PC-9 (cell line): ENCODE measurements at regions of chr3 and their contacts with region 1.

Region 1: GRCh38 chr3:115814778-115815380 is 191.6 kb downstream of the GAP43 start:
- DNase-seq: peak in 1 of 2 experiments; percentile 76
- H3K4me3 ChIP-seq: no peak overlapping the region
- H3K27ac ChIP-seq: no peak overlapping the region
- H3K4me1 ChIP-seq: no peaks in the 10 kb centered on the region
- H3K27me3 ChIP-seq: no peaks in the 10 kb centered on the region
- CTCF ChIP-seq: peak; percentile 99

Region 2: GRCh38 chr3:114152519-114153151 is 1662.2 kb before region 1 on chr3:
- CTCF ChIA-PET with region 1: no interaction called
- POLR2A ChIA-PET with region 1: no interaction called
- intact Hi-C with region 1: loop called (anchors 1 kb)
- DNase-seq: peak; percentile 60 to 85
- H3K4me3 ChIP-seq: peak overlapping the region; percentile 61
- H3K27ac ChIP-seq: no peak overlapping the region
- H3K4me1 ChIP-seq: peaks cover 9% of the 10 kb centered on the region; the same call in 1 of the 2 replicates
- H3K27me3 ChIP-seq: no peaks in the 10 kb centered on the region
- CTCF ChIP-seq: peak; percentile 91

Region 3: GRCh38 chr3:114383875-114384557 is 1430.9 kb before region 1 on chr3:
- CTCF ChIA-PET with region 1: interaction called, 3 read pairs
- POLR2A ChIA-PET with region 1: no interaction called
- intact Hi-C with region 1: loop called (anchors 2 kb)
- DNase-seq: peak; percentile 38 to 65
- H3K4me3 ChIP-seq: no peak overlapping the region
- H3K27ac ChIP-seq: no peak overlapping the region
- H3K4me1 ChIP-seq: no peaks in the 10 kb centered on the region; the same call in 1 of the 2 replicates
- H3K27me3 ChIP-seq: no peaks in the 10 kb centered on the region
- CTCF ChIP-seq: peak; percentile 93

Region 4: DNA sequence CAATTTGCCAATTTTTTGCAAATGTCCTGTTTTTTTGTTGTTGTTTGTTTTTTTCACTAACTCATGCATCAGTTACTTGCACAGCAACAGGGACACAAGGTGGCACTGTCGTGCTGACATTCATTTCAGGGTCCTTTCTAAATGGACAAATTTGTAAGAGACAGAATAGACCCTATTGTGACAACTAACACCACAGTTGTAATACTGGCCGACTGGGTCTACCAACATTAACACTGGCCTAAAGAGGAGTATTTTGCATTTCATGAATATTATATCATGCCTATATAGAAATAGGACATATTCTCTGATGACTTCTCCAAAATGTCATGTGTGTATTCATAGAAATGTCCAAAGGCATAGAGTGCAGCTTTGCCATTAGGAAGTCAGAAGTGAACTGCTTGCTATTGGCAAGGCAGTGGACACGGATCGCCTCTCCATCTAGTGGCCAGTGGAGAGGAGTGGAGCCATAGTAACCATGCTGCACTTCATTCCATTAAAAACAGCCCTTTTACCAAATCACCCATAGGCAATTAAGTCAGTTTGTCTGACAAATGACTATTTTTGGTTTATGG is 722.6 kb before region 1 on chr3:
- CTCF ChIA-PET with region 1: no interaction called
- POLR2A ChIA-PET with region 1: no interaction called
- intact Hi-C with region 1: loop called (anchors 1 kb)
- DNase-seq: peak in 1 of 2 experiments; percentile 40
- H3K4me3 ChIP-seq: no peak overlapping the region
- H3K27ac ChIP-seq: no peak overlapping the region
- H3K4me1 ChIP-seq: no peaks in the 10 kb centered on the region
- H3K27me3 ChIP-seq: no peaks in the 10 kb centered on the region
- CTCF ChIP-seq: peak; percentile 75

Region 5: DNA sequence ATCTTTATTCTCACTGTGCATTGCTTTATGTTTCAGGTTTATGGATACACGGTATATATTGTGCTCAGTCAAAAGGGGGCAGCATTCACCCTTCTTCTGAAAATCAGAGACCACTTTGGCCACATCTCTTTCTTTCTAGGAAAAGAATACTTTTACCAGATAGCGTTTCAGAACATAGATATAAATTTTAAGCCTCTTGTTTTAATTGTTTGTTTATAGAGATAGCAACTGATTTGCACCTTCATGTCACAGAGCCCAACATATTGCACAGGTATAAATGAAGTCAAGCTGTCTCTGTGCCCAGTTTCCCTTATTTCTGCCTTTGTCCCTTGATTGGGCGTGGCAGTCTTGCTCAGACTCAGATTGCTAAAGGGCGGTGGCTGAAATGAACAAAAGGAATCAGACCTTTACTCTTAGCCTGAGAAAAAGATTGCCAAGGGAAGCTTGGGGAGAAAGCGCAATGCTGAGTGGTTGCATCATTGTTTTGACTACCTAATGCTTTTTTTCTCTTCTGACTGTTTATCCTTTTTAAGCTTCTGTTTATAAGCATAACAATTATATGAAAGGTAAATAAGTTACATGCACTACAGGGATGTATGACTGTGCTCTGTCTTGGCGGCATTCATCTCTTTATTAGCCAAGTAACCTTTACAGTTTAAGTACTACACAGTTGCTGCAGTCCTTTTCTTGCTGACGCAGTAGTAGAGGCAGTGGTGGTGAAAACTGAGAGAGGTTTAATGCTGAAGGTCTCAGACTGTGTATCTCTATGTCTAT is 597.0 kb before region 1 on chr3:
- CTCF ChIA-PET with region 1: interaction called, 4 read pairs
- POLR2A ChIA-PET with region 1: no interaction called
- intact Hi-C with region 1: loop called (anchors 1 kb)
- DNase-seq: peak; percentile 40 to 51
- H3K4me3 ChIP-seq: no peak overlapping the region
- H3K27ac ChIP-seq: no peak overlapping the region
- H3K4me1 ChIP-seq: peaks cover 7% of the 10 kb centered on the region
- H3K27me3 ChIP-seq: no peaks in the 10 kb centered on the region
- CTCF ChIP-seq: peak; percentile 84